A673 (cell line): ENCODE measurements at regions of chr17 and their contacts with region 1.

Region 1: GRCh38 chr17:37609170-37610040 is at the start of gene SYNRG:
- DNase-seq: peak; percentile 91
- H3K4me3 ChIP-seq: peak within 1 kb of the TSS; percentile 85
- H3K27ac ChIP-seq: peak within 1 kb of the TSS; percentile 90
- H3K4me1 ChIP-seq: no peaks in the 10 kb centered on the region
- H3K27me3 ChIP-seq: no peaks in the 10 kb centered on the region
- CTCF ChIP-seq: peak; percentile 37
- total RNA-seq, gene SYNRG: 21.3 and 22.5 TPM in 2 replicates

Region 2: DNA sequence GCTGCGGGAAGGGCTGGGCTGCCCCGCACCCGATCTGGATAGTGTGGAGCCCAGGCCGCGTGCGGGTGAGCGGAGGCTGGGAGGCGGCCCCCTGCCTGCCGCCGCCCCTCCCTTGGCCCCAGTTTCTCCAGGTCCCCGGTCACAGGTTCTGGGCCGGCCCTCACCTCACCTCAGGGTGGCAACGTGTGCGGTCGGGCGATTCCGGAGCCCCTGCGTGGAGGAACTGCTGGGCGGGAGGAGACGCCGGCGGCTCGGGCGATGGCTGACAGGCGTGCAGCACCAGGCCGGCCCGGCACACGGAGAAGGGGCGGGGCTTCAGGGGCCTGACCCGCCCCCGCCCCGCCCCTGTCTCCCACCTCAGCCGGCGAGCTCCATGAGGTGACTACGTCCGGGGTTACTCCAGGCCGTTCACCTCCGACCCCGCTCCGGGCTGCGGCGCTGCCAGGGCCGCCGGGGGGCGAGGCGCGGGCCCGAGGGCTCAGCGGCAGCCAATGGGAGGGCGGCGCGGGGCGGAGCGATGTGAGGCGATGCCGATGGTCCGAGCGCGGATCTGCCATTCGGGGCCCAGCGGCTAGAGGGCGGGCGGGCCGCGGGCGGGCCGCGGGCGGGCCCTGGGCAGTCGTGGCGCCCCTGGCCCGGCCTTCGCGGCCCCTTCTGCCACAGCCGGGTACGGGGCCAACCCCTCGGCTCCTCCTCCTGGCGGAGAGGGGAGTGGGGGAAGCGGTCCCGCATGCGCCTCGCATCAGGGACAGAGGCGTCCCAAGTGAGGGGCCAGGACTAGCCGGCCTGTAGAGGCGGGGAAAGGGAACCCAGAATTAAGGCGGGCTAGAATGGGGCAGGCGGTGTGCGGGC is 250.3 kb before region 1 on chr17:
- CTCF ChIA-PET with region 1: no interaction called
- POLR2A ChIA-PET with region 1: no interaction called
- intact Hi-C with region 1: loop called (anchors 10 kb)
- DNase-seq: peak; percentile 68
- H3K4me3 ChIP-seq: peak overlapping the region; percentile 86
- H3K27ac ChIP-seq: peak overlapping the region; percentile 70
- H3K4me1 ChIP-seq: no peaks in the 10 kb centered on the region
- H3K27me3 ChIP-seq: no peaks in the 10 kb centered on the region
- CTCF ChIP-seq: no peak

Region 3: DNA sequence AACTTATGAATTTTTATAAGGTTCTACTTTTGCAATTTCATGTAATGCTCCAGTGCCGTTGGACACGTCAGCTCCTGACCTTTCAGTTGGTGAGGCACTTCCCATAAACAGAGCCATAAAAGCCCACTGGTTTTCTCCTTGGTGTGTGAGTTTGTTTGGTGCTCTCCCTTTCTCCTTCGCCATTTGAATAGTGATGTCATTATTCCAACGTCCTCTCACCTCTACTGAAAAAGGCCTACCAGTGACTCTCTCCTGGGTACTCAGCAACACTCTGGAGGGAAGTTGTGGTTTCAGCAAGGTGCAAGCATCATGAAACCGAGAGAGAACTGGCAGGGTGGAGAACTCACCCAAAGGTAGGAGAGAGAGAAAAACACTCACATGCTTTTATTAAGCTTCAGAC is 165.1 kb after region 1 on chr17:
- CTCF ChIA-PET with region 1: no interaction called
- POLR2A ChIA-PET with region 1: no interaction called
- intact Hi-C with region 1: no loop called
- DNase-seq: no peak
- H3K4me3 ChIP-seq: no peak overlapping the region
- H3K27ac ChIP-seq: no peak overlapping the region
- H3K4me1 ChIP-seq: no peaks in the 10 kb centered on the region
- H3K27me3 ChIP-seq: no peaks in the 10 kb centered on the region
- CTCF ChIP-seq: no peak